GM13977 (cell line): ENCODE measurements at regions of chr2 and their contacts with region 1.

Region 1: GRCh38 chr2:27191053-27191829 is 20.6 kb upstream of the ATRAID start:
- DNase-seq: peak; percentile 69
- CTCF ChIP-seq: peak; percentile 72

Region 2: GRCh38 chr2:26970244-26970920 is 220.9 kb before region 1 on chr2 and contains the start of gene MAPRE3:
- in situ Hi-C with region 1: loop called (anchors 25 kb)
- DNase-seq: peak; percentile 95
- CTCF ChIP-seq: no peak

Region 3: GRCh38 chr2:27303093-27304025 is 112.1 kb after region 1 on chr2:
- in situ Hi-C with region 1: no loop called
- DNase-seq: peak; percentile 73
- CTCF ChIP-seq: peak; percentile 77

Region 4: DNA sequence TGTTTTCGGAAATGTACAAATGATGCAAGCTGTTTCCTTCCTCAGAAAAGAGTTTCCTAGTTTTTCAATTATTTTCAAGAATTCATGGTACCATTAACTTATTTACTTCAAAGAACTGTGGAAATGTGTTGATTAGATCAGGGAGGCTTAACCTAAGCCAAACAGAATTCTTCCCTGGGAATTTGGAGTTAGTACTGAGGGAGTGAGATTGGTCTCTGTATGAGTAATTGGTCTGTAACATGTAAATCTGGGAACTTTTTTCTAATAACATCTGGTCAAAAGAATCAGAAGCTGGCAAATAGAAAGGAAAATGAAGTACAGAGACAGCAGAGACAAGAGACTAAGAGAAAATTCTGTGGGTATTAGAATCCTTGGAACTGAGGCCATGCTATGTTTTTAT is 845.1 kb after region 1 on chr2:
- in situ Hi-C with region 1: no loop called
- DNase-seq: no peak
- CTCF ChIP-seq: no peak